Activated CD4-positive, alpha-beta memory T cell treated with anti-CD3 and anti-CD28 coated beads for 36 hours (primary cell): ENCODE measurements at regions of chr19 and their contacts with region 1.

Region 1: DNA sequence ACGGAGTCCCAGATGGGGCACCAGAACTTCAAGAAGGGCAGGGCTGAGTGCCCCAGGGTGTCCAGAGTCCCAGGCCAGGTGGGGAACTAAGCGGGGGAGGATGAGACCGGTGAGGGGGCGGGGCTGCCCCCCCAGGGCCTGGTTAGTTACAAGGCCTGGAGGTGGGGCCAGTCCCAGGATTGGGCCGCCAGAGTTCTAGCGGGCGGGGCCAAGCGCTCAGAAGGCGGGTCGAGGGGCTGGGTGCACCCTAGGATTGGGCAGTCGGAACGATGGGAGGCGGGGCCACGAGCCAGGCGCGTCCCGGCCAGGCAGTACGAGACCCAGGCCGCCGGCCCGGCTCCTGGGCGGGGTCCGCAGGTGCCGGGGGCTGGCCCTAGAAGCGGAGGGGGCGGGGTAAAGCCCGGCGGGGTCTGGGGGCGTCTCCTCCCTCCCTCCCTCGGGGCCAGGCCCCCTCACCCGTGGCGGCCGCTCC is 571 bp downstream of the ZNF653 start:
- DNase-seq: peak; percentile 97
- H3K4me3 Mint-ChIP-seq: peak overlapping the region; percentile 83
- H3K27ac Mint-ChIP-seq: peak overlapping the region; percentile 58
- H3K4me1 Mint-ChIP-seq: peaks cover 14% of the 10 kb centered on the region
- H3K27me3 Mint-ChIP-seq: no peaks in the 10 kb centered on the region

Region 2: GRCh38 chr19:11528551-11529341 is 23.7 kb after region 1 on chr19 and contains the start of gene ECSIT:
- CTCF ChIA-PET with region 1: no interaction called
- POLR2A ChIA-PET with region 1: no interaction called
- intact Hi-C with region 1: loop called (anchors 1 kb)
- DNase-seq: peak; percentile 97
- H3K4me3 Mint-ChIP-seq: peak within 1 kb of the TSS; percentile 93
- H3K27ac Mint-ChIP-seq: peak within 1 kb of the TSS; percentile 77
- H3K4me1 Mint-ChIP-seq: peaks cover 19% of the 10 kb centered on the region
- H3K27me3 Mint-ChIP-seq: no peaks in the 10 kb centered on the region
- total RNA-seq, gene ECSIT: 34.9 to 36.6 TPM